ENCODE measurements at regions of chr17 and their contacts with region 1.

Region 1: GRCh38 chr17:77494664-77495435 is 354.1 kb downstream of the SEC14L1 start:
- DNase-seq: peak; percentile 73 to 86 (median 86)
- H3K4me3 ChIP-seq: no peak overlapping the region
- H3K27ac ChIP-seq: no peak overlapping the region
- H3K4me1 ChIP-seq: peaks cover 2% of the 10 kb centered on the region
- H3K27me3 ChIP-seq: no peaks in the 10 kb centered on the region
- CTCF ChIP-seq: peak; percentile 87 to 99 (median 98)
- EP300 ChIP-seq: no peak
- POLR2A ChIP-seq: no peak

Region 2: GRCh38 chr17:77096570-77097214 is 398.2 kb before region 1 on chr17:
- intact Hi-C with region 1: loop called in 2 of 4 experiments (anchors 5 to 10 kb)
- DNase-seq: peak in 1 of 5 donors; percentile 48
- H3K4me3 ChIP-seq: no peak overlapping the region
- H3K27ac ChIP-seq: peak overlapping the region; percentile 4 to 59
- H3K4me1 ChIP-seq: peaks cover 12% of the 10 kb centered on the region
- H3K27me3 ChIP-seq: no peaks in the 10 kb centered on the region
- CTCF ChIP-seq: peak; percentile 63 to 85 (median 75)
- EP300 ChIP-seq: no peak
- POLR2A ChIP-seq: no peak

Region 3: GRCh38 chr17:77247048-77247541 is 247.8 kb before region 1 on chr17:
- intact Hi-C with region 1: loop called in 1 of 4 experiments (anchors 10 kb)
- DNase-seq: peak; percentile 78 to 91 (median 88)
- H3K4me3 ChIP-seq: peak overlapping the region; percentile 38
- H3K27ac ChIP-seq: no peak overlapping the region
- H3K4me1 ChIP-seq: peaks cover 10% of the 10 kb centered on the region
- H3K27me3 ChIP-seq: no peaks in the 10 kb centered on the region
- CTCF ChIP-seq: peak; percentile 89 to 99 (median 97)
- EP300 ChIP-seq: no peak
- POLR2A ChIP-seq: no peak

Region 4: GRCh38 chr17:77279448-77280303 is 215.2 kb before region 1 on chr17:
- intact Hi-C with region 1: loop called in 1 of 4 experiments (anchors 5 kb)
- DNase-seq: no peak
- H3K4me3 ChIP-seq: no peak overlapping the region
- H3K27ac ChIP-seq: no peak overlapping the region
- H3K4me1 ChIP-seq: peaks cover 7% of the 10 kb centered on the region
- H3K27me3 ChIP-seq: no peaks in the 10 kb centered on the region
- CTCF ChIP-seq: no peak
- EP300 ChIP-seq: no peak
- POLR2A ChIP-seq: no peak

Region 5: DNA sequence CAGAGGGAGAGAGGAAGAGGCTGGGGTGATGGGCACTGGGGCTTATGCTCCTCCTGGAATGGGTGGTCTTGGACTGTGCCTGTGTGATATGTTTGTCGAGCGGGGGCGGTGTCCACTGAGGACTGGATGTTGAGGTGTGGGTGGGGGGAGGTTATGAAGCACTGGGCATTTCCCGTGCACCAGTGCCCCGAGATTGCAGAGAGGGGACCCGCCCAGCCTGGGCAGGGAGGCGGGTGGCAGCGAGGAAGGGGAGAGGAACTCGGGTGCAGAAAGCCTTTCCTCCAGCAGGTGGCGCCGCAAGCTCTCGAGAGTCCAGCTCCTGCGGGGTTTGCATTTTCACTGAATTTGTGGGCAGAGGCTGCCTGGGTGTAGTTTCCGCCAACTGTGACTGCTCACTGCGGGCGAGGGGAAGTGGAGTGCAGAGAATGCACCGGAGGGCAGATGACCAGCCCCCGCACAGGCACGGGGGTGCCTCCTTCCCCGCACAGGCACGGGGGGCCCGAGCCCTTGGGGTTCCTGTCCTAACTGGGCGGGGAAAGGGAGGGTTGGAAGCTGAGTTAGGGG is 163.5 kb before region 1 on chr17:
- intact Hi-C with region 1: loop called (anchors 2 kb)
- DNase-seq: peak; percentile 89 to 96 (median 94)
- H3K4me3 ChIP-seq: peak overlapping the region; percentile 14
- H3K27ac ChIP-seq: no peak overlapping the region
- H3K4me1 ChIP-seq: no peaks in the 10 kb centered on the region
- H3K27me3 ChIP-seq: no peaks in the 10 kb centered on the region
- CTCF ChIP-seq: peak; percentile 89 to 95 (median 94)
- EP300 ChIP-seq: no peak
- POLR2A ChIP-seq: no peak

Region 6: DNA sequence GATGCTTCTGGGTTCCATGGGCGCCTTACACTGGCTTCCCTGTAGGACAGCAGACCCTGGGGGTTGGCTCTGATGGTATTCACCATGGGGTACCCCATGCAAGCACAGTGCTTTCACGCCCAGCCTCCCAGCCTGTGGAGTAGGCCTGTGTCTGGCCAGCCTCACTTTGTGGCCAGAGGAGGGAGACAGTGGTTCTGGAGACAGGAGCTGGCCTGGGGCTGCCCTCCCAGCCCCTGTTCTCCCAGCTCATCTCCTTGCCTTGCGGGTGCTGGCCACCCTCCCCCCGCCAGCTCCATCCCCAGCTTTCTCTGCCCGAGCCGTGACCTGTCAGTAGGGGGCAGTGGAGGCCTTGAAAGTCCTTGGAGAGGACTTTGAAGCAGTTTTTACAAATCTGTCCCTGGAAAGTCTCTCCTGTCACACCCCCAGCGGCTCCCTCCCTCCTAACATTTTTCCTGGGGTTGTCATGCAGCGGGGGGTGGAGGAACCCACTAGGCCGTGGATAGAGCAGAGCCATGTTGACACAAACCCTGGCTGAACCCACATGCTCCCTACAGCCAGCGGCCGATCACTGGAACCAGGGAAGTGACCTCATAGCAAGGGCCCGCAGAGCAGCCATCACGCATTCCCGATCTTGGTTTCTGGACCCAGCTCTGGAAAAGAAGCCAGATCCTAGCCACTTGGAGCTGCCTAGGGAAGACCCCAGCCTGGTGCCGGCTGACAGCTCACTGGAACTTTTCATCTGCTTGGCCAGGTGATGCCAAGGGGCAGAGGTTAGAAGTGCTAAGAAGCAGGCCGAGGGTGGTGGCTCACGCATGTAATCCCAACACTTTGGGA is 64.7 kb before region 1 on chr17:
- intact Hi-C with region 1: loop called in 3 of 4 experiments (anchors 2 to 5 kb)
- DNase-seq: peak; percentile 90 to 95 (median 94)
- H3K4me3 ChIP-seq: no peak overlapping the region
- H3K27ac ChIP-seq: peak overlapping the region; percentile 55 to 65
- H3K4me1 ChIP-seq: peaks cover 56% of the 10 kb centered on the region
- H3K27me3 ChIP-seq: no peaks in the 10 kb centered on the region
- CTCF ChIP-seq: peak; percentile 55 to 93 (median 90)
- EP300 ChIP-seq: peak; percentile 55
- POLR2A ChIP-seq: no peak

Region 7: GRCh38 chr17:77437017-77437416 is 57.8 kb before region 1 on chr17:
- intact Hi-C with region 1: loop called in 2 of 4 experiments (anchors 5 kb)
- DNase-seq: peak in 4 of 5 donors; percentile 67 to 78 (median 74)
- H3K4me3 ChIP-seq: no peak overlapping the region
- H3K27ac ChIP-seq: peak overlapping the region in 1 of 2 donors; percentile 4
- H3K4me1 ChIP-seq: peaks cover 51% of the 10 kb centered on the region
- H3K27me3 ChIP-seq: no peaks in the 10 kb centered on the region
- CTCF ChIP-seq: no peak
- EP300 ChIP-seq: no peak
- POLR2A ChIP-seq: no peak